ENCODE measurements at regions of chr16 and their contacts with region 1.

Region 1: DNA sequence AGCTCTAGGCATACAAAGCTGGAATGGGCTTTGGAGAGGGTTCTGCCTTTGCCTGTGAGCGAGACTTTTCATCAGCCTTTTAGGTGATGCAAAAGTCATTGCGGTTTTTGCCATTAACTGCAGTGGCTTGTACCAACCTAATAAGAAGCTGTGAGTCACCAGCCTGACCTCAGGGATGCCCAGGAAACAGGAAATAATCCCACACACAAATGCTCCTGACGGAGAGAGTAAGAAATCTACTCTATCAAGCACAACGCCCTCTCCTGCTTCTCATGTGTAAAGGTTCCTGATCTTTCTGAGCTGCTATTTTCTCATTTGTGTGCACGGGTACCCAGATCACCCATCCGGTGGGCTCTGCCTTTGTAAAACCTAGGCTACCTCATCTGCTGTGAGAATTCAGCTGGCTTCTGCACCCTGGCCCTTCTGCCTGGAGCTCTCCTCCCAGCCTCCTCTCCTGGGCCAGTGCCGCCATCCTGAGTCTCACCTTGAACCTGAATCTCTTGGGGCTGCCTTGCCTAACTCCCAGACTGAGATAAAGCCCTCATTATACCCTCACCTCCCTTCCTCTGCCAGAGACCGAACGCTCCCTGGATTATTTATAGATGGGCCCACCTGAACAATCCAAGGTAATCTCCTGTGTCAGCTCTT is 299.7 kb downstream of the C16orf95 start:
- DNase-seq: peak; percentile 94
- H3K4me3 ChIP-seq: no peak overlapping the region
- H3K27ac ChIP-seq: no peak overlapping the region
- H3K4me1 ChIP-seq: peaks cover 9% of the 10 kb centered on the region
- H3K27me3 ChIP-seq: no peaks in the 10 kb centered on the region
- CTCF ChIP-seq: peak; percentile 36 to 45

Region 2: GRCh38 chr16:85995541-85996423 is 1021.7 kb before region 1 on chr16:
- CTCF ChIA-PET with region 1: no interaction called
- dilution Hi-C with region 1: no loop called
- in situ Hi-C with region 1: no loop called
- intact Hi-C with region 1: no loop called
- DNase-seq: no peak
- H3K4me3 ChIP-seq: no peak overlapping the region
- H3K27ac ChIP-seq: no peak overlapping the region
- H3K4me1 ChIP-seq: no peaks in the 10 kb centered on the region
- H3K27me3 ChIP-seq: peaks cover 2% of the 10 kb centered on the region
- CTCF ChIP-seq: no peak

Region 3: GRCh38 chr16:86823895-86824671 is 193.4 kb before region 1 on chr16:
- CTCF ChIA-PET with region 1: no interaction called
- dilution Hi-C with region 1: no loop called
- in situ Hi-C with region 1: loop called in 1 of 2 experiments (anchors 25 kb)
- intact Hi-C with region 1: no loop called
- DNase-seq: peak; percentile 96
- H3K4me3 ChIP-seq: no peak overlapping the region
- H3K27ac ChIP-seq: peak overlapping the region; percentile 40
- H3K4me1 ChIP-seq: peaks cover 43% of the 10 kb centered on the region
- H3K27me3 ChIP-seq: no peaks in the 10 kb centered on the region
- CTCF ChIP-seq: no peak

Region 4: DNA sequence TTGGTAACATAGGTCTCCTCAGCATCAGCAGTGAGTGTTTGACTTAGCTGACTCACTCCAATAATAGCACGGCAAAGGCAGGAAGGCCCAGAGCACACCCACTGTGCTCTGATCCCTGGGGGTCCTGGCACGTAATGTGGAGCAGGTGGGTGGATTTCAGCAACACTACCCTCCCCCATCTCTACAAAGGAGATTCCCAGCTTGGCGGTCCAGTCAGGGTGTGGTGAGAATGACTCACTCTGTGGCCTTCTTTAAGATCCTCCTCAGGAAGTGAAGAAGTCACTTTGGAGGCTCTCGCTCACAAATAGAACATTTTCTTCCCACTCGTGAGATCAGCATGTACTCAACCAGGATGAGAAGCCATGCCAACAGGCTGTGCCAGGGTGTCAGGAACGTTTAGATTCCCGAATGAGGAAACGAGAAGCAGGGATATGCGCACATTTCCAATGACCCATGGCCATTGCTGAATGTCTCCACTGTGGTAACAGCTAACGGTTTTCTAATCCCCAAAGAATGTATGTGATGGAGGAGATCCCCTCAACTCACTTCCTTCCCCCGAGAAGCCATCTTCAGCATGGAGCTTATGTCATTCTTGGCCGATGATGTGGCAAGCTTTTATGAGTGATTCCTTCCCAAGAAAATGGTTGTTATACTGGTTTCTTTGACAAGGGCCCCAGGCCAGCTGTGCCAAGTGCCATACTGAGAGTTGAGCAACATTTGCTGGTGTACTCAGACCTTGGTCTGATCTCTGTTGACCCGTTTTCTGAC is 65.5 kb before region 1 on chr16:
- CTCF ChIA-PET with region 1: no interaction called
- dilution Hi-C with region 1: no loop called
- in situ Hi-C with region 1: no loop called
- intact Hi-C with region 1: loop called (anchors 1 kb)
- DNase-seq: peak; percentile 92
- H3K4me3 ChIP-seq: no peak overlapping the region
- H3K27ac ChIP-seq: peak overlapping the region; percentile 17
- H3K4me1 ChIP-seq: peaks cover 30% of the 10 kb centered on the region
- H3K27me3 ChIP-seq: no peaks in the 10 kb centered on the region
- CTCF ChIP-seq: no peak

Region 5: DNA sequence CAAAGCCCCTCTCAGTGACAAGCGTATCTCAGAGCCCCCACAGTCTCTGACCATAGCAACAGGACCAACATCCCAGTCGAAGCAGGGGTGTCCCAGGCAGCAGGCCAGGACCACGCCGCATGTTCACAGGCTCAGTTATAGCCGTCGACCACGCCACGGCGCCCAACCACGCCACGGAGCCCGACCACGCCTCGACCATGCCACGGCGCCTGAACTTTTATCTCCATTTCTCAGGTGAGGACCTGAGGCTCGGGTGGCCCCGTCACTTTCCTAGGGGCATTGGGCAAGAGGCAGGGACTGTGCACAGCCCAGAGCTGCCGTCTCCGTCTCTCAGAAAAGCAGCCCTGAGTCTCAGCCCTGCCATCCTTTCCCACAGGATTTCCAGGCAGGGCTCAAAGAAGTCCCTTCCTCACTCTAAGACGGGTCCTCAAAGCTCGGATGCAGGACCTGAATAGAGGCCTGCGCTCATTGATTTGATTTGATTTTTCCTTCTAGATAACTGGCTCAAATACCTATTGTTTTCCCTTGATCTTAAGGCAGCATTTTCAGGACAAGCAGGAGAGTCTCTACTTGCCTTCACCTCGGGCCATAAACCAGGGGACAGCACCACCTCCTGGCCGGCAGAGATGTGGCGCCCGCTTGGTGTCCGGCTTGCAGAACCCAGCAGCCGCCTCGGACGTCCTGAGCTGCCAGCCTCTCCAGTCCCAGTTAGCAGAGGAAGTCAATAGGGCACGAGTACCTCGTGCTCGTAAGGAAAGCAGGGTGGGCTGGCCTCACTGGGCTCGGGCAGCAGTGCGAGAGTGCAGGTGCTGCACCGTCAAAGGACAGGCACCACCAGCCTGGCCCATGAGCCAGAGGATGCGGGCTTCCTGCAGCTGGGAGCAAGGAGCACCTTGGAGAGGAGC is 261.0 kb after region 1 on chr16:
- CTCF ChIA-PET with region 1: interaction called, 9 read pairs
- dilution Hi-C with region 1: no loop called
- in situ Hi-C with region 1: no loop called
- intact Hi-C with region 1: loop called (anchors 1 kb)
- DNase-seq: peak; percentile 58
- H3K4me3 ChIP-seq: no peak overlapping the region
- H3K27ac ChIP-seq: no peak overlapping the region
- H3K4me1 ChIP-seq: no peaks in the 10 kb centered on the region
- H3K27me3 ChIP-seq: no peaks in the 10 kb centered on the region
- CTCF ChIP-seq: peak; percentile 85 to 93

Measured in mammary epithelial cell (primary cell).